Aorta (tissue), 5 donors: ENCODE measurements at regions of chr1 and their contacts with region 1.

Region 1: GRCh38 chr1:114581335-114582287 is at the start of gene BCAS2:
- DNase-seq: peak; percentile 97 to 98
- ATAC-seq: peak; percentile 98
- H3K4me3 ChIP-seq: peak within 1 kb of the TSS; percentile 32 to 89
- H3K27ac ChIP-seq: peak within 1 kb of the TSS; percentile 15 to 71
- H3K4me1 ChIP-seq: peaks cover 0 to 4% of the 10 kb centered on the region in 2 donors
- H3K27me3 ChIP-seq: no peaks in the 10 kb centered on the region
- total RNA-seq, gene BCAS2: 23.9 to 29.8 TPM

Region 2: GRCh38 chr1:114670083-114671010 is 88.7 kb after region 1 on chr1:
- intact Hi-C with region 1: loop called in 1 of 2 experiments (anchors 2 kb)
- DNase-seq: peak; percentile 96 to 98
- ATAC-seq: peak; percentile 100
- H3K4me3 ChIP-seq: peak overlapping the region; percentile 65 to 97
- H3K27ac ChIP-seq: peak overlapping the region in 1 of 2 donors; percentile 24
- H3K4me1 ChIP-seq: no peaks in the 10 kb centered on the region
- H3K27me3 ChIP-seq: no peaks in the 10 kb centered on the region

Region 3: GRCh38 chr1:114695430-114696058 is 113.9 kb after region 1 on chr1 and contains the start of gene AMPD1:
- intact Hi-C with region 1: no loop called
- DNase-seq: no peak
- ATAC-seq: no peak
- H3K4me3 ChIP-seq: no peak within 1 kb of the TSS
- H3K27ac ChIP-seq: no peak within 1 kb of the TSS
- H3K4me1 ChIP-seq: no peaks in the 10 kb centered on the region
- H3K27me3 ChIP-seq: no peaks in the 10 kb centered on the region
- total RNA-seq, gene AMPD1: 0.52 TPM in 1 of 2 donors, not detected in the other